ENCODE measurements at regions of chr5 and their contacts with region 1.

Region 1: DNA sequence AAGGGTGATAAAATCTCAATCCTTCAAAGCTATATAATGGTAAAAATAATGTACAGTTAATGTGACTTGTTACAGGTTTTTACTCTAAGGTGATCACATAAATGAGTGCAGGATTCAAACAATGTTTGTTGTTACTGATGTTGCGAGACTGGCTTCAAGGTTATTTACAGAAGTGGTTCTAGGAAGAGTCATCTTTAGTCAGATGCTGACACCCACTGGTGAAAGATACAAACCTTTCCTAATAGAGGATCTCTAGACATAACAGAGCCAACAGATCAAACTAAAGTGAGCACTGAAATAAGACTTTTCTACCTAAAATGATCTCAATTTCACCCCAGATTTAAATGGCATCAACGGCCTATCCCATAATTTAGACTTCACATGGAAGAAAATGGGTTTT is 20.2 kb downstream of the ARSB start:
- DNase-seq: no peak
- H3K4me3 ChIP-seq: no peak overlapping the region
- H3K27ac ChIP-seq: no peak overlapping the region
- H3K4me1 ChIP-seq: no peaks in the 10 kb centered on the region
- H3K27me3 ChIP-seq: no peaks in the 10 kb centered on the region
- CTCF ChIP-seq: peak; percentile 22 to 61 (median 50)
- EP300 ChIP-seq: no peak
- POLR2A ChIP-seq: no peak

Region 2: DNA sequence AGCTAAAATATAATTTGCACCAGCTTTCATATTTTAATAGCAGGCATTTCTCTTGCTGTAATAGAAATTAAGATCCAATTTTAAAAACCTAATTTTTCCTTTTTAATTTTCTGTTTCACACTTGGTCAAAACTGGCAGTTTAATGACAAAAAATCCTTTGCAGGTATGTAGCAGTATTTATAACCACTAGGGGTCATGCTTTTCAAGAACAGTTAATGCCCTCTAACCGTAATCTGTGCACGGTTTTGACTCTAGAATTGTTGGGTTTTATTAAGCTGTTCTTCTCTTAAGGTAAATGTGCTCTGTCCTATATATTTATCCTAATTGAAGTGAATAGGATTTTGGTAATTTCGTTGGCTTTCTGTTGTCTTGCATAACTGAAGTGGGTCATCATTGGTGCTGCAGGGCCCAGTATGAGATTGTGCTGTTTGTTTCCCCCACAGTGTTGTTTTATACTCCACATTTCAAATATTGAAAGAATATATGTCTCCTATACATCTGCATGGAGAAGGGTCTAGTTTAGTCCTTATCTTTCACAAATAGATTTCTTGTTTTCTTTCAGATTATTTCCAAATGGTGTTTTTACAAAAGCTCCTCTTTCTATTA is 497.0 kb before region 1 on chr5:
- intact Hi-C with region 1: loop called (anchors 5 kb)
- DNase-seq: no peak
- H3K4me3 ChIP-seq: no peak overlapping the region
- H3K27ac ChIP-seq: no peak overlapping the region
- H3K4me1 ChIP-seq: peaks cover 0 to 4% (median 0%) of the 10 kb centered on the region in 4 donors
- H3K27me3 ChIP-seq: no peaks in the 10 kb centered on the region
- CTCF ChIP-seq: peak; percentile 53 to 80 (median 76)
- EP300 ChIP-seq: no peak
- POLR2A ChIP-seq: no peak

Region 3: DNA sequence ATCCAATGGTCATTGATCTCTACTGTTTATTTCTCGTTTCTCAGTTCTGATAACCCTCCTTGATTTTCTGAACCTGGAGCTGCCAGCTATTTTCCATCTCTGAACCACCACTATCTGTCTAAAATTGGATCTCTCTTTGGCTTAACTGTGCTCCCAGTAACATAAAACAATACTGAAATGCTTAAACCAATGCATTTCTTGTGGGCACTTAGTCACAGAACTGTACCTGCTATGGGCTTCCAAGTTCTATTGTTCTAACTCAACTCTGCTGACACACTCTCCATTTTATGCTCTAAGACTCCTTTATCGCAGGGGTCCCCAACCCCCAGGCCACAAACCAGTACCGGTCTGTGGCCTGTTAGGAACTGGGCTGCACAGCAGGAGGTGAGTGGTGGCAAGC is 437.0 kb before region 1 on chr5:
- intact Hi-C with region 1: loop called (anchors 2 kb)
- DNase-seq: no peak
- H3K4me3 ChIP-seq: no peak overlapping the region
- H3K27ac ChIP-seq: peak overlapping the region; percentile 66 to 86 (median 82)
- H3K4me1 ChIP-seq: peaks cover 0 to 73% (median 45%) of the 10 kb centered on the region in 4 donors
- H3K27me3 ChIP-seq: no peaks in the 10 kb centered on the region
- CTCF ChIP-seq: no peak
- EP300 ChIP-seq: no peak
- POLR2A ChIP-seq: no peak

Region 4: GRCh38 chr5:78537821-78538220 is 427.1 kb before region 1 on chr5:
- intact Hi-C with region 1: loop called (anchors 2 kb)
- DNase-seq: peak; percentile 70
- H3K4me3 ChIP-seq: no peak overlapping the region
- H3K27ac ChIP-seq: peak overlapping the region in 1 of 4 donors; percentile 66
- H3K4me1 ChIP-seq: peaks cover 0 to 71% (median 46%) of the 10 kb centered on the region in 4 donors
- H3K27me3 ChIP-seq: no peaks in the 10 kb centered on the region
- CTCF ChIP-seq: peak; percentile 43 to 68 (median 52)
- EP300 ChIP-seq: no peak
- POLR2A ChIP-seq: no peak

Region 5: GRCh38 chr5:78886341-78887230 is 78.3 kb before region 1 on chr5:
- intact Hi-C with region 1: no loop called
- DNase-seq: no peak
- H3K4me3 ChIP-seq: no peak overlapping the region
- H3K27ac ChIP-seq: no peak overlapping the region
- H3K4me1 ChIP-seq: peaks cover 0 to 28% (median 17%) of the 10 kb centered on the region in 4 donors
- H3K27me3 ChIP-seq: no peaks in the 10 kb centered on the region
- CTCF ChIP-seq: peak in 2 of 4 experiments; percentile 14 to 42
- EP300 ChIP-seq: no peak
- POLR2A ChIP-seq: no peak

Region 6: GRCh38 chr5:78899922-78900362 is 64.9 kb before region 1 on chr5:
- intact Hi-C with region 1: loop called (anchors 10 kb)
- DNase-seq: no peak
- H3K4me3 ChIP-seq: no peak overlapping the region
- H3K27ac ChIP-seq: no peak overlapping the region
- H3K4me1 ChIP-seq: peaks cover 0 to 6% (median 2%) of the 10 kb centered on the region in 4 donors
- H3K27me3 ChIP-seq: no peaks in the 10 kb centered on the region
- CTCF ChIP-seq: peak in 3 of 4 experiments; percentile 21 to 25 (median 23)
- EP300 ChIP-seq: no peak
- POLR2A ChIP-seq: no peak

Measured in sigmoid colon (tissue), 7 donors.